Caco-2 (cell line): ENCODE measurements at regions of chr11 and their contacts with region 1.

Region 1: GRCh38 chr11:8768625-8769333 is 86.2 kb downstream of the RPL27A start:
- DNase-seq: peak; percentile 43 to 55
- H3K4me3 ChIP-seq: no peak overlapping the region
- H3K4me3 Mint-ChIP-seq: no peak overlapping the region
- H3K27ac Mint-ChIP-seq: no peak overlapping the region
- H3K4me1 ChIP-seq: peaks cover 14% of the 10 kb centered on the region; the same call in 1 of the 2 replicates
- H3K4me1 Mint-ChIP-seq: peaks cover 12% of the 10 kb centered on the region
- H3K27me3 ChIP-seq: no peaks in the 10 kb centered on the region
- H3K27me3 Mint-ChIP-seq: no peaks in the 10 kb centered on the region
- CTCF ChIP-seq: peak in 1 of 2 experiments; percentile 60

Region 2: GRCh38 chr11:8699903-8700302 is 68.9 kb before region 1 on chr11:
- CTCF ChIA-PET with region 1: interaction called, 3 read pairs
- POLR2A ChIA-PET with region 1: no interaction called
- intact Hi-C with region 1: loop called (anchors 2 kb)
- DNase-seq: no peak
- H3K4me3 ChIP-seq: no peak overlapping the region
- H3K4me3 Mint-ChIP-seq: no peak overlapping the region
- H3K27ac Mint-ChIP-seq: peak overlapping the region; percentile 69
- H3K4me1 ChIP-seq: peaks cover 21% of the 10 kb centered on the region
- H3K4me1 Mint-ChIP-seq: peaks cover 22% of the 10 kb centered on the region
- H3K27me3 ChIP-seq: no peaks in the 10 kb centered on the region
- H3K27me3 Mint-ChIP-seq: no peaks in the 10 kb centered on the region
- CTCF ChIP-seq: no peak

Region 3: DNA sequence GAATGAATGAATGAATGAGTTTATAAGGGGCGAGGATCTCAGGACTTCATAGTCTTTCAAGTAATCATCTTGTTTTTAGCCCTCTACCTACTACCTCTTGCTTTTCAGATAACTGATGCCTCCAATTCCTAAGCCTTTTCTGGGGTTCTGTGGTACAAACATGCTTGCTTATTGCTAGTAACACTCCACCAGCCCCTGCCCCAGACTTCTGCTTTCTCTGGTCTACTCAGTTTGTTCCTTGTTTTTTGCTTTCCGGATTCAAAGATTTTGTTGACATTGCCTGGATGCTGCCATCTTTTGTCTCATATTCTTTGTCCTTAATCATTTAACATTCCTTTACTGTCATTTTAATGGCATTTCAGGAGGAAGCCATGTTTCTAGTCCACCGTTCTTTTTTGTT is 204.3 kb after region 1 on chr11:
- CTCF ChIA-PET with region 1: no interaction called
- POLR2A ChIA-PET with region 1: no interaction called
- intact Hi-C with region 1: no loop called
- DNase-seq: no peak
- H3K4me3 ChIP-seq: no peak overlapping the region
- H3K4me3 Mint-ChIP-seq: no peak overlapping the region
- H3K27ac Mint-ChIP-seq: no peak overlapping the region
- H3K4me1 ChIP-seq: no peaks in the 10 kb centered on the region
- H3K4me1 Mint-ChIP-seq: no peaks in the 10 kb centered on the region
- H3K27me3 ChIP-seq: no peaks in the 10 kb centered on the region
- H3K27me3 Mint-ChIP-seq: no peaks in the 10 kb centered on the region
- CTCF ChIP-seq: no peak